ENCODE measurements at regions of chr4 and their contacts with region 1.

Region 1: DNA sequence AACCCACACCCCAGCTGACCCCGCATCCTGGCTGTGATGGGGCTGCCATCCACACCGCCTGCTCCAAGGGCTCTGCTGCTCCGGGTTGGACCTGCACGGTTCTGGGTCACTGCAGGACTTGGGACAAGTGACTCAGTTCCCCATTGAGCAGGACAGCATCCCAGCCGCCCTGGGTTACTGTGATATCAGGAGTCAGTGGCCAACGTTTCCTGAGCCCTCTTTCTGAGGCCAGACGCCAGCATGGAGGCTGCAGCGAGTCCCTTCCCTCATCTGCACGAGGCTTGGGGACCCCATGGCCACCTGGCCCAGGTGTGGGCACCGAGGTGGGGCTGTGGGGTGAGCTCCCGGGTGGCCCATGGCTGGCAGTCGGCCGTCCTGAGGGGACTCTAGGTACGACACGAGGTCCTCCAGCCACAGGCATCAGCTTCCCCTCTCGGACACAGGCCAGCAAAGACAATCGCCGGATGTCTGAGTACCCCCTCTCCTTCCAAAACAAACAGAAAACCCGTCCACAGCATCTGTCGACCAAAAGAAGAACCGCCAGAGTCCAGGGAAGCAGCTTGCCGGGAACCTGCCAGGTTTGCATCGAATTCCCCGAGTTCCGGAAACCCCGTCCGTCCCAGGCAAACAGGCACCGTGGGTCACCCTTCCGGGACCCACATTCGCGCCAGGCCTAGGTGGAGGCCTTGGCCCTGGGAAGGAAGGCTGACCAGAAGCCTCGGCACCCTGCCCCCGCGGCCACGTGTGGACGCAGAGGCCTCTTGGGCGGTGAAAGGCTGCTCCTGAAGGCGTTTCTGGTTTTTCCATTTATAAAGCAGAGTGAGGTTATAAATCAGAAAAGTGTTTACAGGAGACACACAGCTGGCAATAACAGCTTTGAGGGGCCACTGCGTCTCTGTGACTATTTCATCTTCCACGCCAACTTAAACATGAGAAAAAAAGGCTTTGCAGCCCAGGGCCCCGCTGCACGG is 136.0 kb downstream of the FAM53A start:
- DNase-seq: no peak
- H3K4me3 ChIP-seq: no peak overlapping the region
- H3K27me3 ChIP-seq: no peaks in the 10 kb centered on the region
- CTCF ChIP-seq: no peak

Region 2: DNA sequence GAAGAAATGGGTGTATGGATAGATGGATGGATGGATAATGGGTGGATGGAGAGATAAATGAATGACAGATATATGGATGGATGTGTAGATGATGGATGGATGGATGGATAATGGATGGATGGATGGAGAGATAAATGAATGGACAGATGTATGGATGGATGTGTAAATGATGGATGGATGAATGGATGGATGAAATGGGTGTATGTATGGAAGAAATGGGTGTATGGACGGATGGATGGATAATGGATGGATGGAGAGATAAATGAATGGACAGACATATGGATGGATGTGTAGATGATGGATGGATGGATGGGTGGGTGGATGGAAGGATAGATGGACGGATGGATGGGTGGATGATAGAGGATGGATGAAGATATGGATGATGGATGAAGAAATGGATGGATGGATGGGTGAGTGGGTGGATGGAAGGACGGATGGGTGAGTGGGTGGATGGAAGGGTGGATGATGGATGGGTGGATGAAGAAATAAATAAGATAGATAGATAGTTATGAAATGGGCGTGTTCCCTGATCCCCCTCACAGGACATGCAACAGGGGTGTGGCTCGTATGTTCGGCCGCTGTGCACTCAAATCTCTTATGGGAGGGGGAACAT is 50.8 kb before region 1 on chr4:
- CTCF ChIA-PET with region 1: no interaction called
- POLR2A ChIA-PET with region 1: no interaction called
- DNase-seq: no peak
- H3K4me3 ChIP-seq: no peak overlapping the region
- H3K27me3 ChIP-seq: peaks cover 1% of the 10 kb centered on the region; the same call in 1 of the 2 replicates
- CTCF ChIP-seq: no peak

Region 3: GRCh38 chr4:1533401-1534064 is 14.6 kb before region 1 on chr4:
- CTCF ChIA-PET with region 1: interaction called, 14 read pairs
- POLR2A ChIA-PET with region 1: no interaction called
- DNase-seq: no peak
- H3K4me3 ChIP-seq: no peak overlapping the region
- H3K27me3 ChIP-seq: peaks cover 18% of the 10 kb centered on the region
- CTCF ChIP-seq: no peak

Region 4: DNA sequence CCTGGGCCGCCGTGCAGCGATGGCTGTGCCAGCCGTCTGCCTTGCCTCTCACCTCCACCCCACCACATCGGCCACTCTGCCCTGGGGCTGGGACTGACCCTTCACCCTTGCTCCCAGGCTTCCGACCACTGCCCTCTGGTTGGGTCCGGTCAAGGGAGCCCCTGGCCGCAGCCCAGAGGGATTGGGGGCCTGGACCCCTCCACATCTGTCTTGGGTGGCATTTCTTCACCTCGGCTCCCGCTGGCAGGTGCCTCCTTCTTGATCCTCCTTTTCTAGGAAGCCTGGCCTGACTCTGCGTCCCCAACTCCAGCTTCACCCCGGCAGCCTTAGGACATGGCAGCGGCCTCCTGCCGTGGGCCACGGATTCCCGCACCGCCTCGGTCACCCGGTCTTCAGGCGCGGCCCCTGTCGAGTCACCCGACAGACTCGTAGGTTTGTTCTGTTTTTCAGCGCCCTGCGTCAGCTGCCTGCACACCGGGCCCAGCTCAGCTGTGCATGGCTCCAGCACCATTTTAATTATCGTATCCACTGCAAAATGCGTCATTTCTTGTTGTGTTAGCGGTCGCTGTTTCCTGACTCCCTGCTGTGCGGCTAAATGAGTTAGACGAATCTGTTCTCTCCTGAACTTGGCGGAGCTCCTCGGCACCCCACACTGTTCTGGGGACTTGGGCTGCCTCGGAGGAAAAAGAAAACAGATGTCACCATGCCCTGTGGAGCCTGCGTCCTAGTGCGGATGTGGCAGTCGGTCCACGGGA is 11.9 kb after region 1 on chr4:
- CTCF ChIA-PET with region 1: interaction called, 15 read pairs
- POLR2A ChIA-PET with region 1: no interaction called
- DNase-seq: no peak
- H3K4me3 ChIP-seq: no peak overlapping the region
- H3K27me3 ChIP-seq: peaks cover 17% of the 10 kb centered on the region
- CTCF ChIP-seq: no peak

Region 5: DNA sequence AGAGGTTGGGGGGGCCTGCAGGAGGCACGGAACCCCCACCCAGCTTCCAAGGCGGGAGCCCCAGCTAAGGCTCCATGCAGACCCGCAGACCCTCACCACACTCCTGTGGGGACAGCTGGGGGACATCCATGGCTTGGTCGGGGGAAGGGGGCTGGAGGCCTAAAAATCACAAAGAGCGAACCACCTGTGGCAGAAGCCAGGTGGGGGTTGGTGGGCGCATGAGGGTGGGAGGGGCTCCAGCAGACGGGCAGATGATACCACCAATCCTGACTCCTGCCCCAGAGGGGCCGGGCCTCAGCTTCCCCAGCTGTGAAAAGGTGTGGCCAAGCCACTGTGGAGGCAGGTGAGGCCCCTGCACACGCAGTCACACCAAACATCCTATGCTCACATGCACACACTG is 24.4 kb after region 1 on chr4:
- CTCF ChIA-PET with region 1: interaction called, 19 read pairs
- POLR2A ChIA-PET with region 1: no interaction called
- DNase-seq: no peak
- H3K4me3 ChIP-seq: no peak overlapping the region
- H3K27me3 ChIP-seq: peaks cover 1% of the 10 kb centered on the region; the same call in 1 of the 2 replicates
- CTCF ChIP-seq: no peak

Measured in BJ (cell line).